ENCODE measurements at regions of chr19 and their contacts with region 1.

Region 1: GRCh38 chr19:1113033-1113985 is 9.5 kb downstream of the GPX4 start:
- DNase-seq: peak; percentile 89 to 99
- H3K4me3 ChIP-seq: no peak overlapping the region
- CTCF ChIP-seq: peak in 1 of 3 donors; percentile 35
- POLR2A ChIP-seq: no peak

Region 2: GRCh38 chr19:970695-971094 is 142.6 kb before region 1 on chr19:
- intact Hi-C with region 1: no loop called
- DNase-seq: no peak
- H3K4me3 ChIP-seq: no peak overlapping the region
- CTCF ChIP-seq: no peak
- POLR2A ChIP-seq: no peak

Region 3: DNA sequence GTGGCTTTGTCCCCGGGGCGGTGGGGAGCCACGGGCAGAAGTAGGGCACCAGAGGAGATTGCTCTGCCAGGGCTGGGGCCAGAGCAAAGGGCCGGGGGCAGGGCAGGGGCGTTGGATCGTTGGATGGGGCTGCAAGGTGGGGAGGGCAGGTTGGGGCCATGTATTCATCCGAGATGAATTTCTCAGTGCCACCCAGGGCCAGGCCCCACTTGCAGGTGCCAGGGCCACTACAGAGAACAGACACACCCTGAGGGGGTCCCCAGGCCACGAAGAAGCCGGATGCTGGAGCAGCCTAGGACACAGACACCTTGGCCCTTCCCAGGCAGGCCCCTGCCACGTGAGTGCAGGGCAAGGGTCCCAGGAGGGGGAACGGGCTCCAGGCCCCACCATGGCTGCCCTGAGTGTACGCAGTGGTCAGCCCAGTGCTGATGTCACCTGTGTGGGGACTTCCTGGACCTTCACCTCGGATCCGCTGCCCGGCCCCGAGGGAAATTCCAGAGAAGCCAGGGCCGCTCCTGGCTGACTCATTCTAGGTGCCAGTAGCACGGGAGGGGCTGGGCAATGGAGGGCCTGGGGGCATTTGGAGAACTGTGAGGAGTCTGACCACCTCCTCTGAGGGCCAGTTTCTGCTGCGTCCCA is 70.3 kb after region 1 on chr19:
- intact Hi-C with region 1: loop called (anchors 10 kb)
- DNase-seq: no peak
- H3K4me3 ChIP-seq: no peak overlapping the region
- CTCF ChIP-seq: no peak
- POLR2A ChIP-seq: no peak